Activated naive CD8-positive, alpha-beta T cell treated with anti-CD3 and anti-CD28 coated beads, Interleukin-2, amount 10 ng/mL, durations not matched to agents 7 days and 5 days (primary cell): ENCODE measurements at regions of chr20 and their contacts with region 1.

Region 1: DNA sequence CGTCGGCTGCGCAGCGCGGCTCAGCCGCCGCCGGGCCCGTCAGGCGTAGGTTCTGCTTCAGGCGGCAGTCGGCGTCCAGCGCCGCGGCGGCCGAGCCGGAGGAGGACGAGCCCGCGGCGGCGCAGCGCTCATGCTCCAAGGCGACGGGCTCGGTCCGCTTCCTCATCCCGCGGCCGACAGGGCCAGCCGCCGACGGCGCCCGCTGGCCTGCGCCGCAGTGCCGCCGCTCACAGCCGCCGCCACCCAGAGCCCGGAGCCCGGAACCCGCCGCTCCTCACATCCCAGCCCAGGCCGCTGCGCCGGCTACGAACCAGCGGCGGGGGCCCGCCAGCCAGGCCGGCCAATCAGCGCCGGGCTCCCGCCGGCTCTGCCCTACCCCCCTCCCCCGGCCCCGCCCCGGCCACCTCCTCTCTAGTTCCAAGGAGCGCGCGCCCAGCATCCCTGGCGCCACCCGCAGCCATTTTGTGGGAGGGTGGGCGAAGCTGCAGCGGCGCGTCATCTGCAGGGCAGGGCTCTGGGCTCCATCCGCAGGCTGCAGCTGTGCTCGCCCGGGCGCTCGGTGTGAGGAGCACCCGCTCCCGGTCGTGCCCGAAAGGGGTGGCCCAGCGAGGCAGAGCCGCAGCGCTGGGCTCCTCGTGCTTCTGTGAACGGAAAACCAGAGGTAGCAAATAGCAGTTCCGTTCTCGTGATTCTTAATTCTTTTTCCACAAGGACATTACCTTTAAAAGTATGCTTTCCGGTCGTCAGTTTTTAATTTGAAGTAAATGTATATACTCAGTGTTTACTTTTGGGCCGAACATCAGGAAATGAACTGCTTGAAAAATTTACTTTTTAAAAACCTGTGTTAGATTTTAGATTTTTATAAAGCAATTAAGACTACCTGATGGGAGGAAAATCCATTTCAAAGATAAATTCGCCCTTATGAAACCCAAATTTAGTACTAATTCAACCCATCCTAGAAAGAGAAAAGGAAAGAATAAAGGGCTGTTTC is at the start of gene ABHD12:
- DNase-seq: peak; percentile 94
- ATAC-seq: peak; percentile 93
- H3K4me3 Mint-ChIP-seq: peak within 1 kb of the TSS; percentile 89
- H3K27ac Mint-ChIP-seq: peak within 1 kb of the TSS; percentile 92
- H3K4me1 Mint-ChIP-seq: peaks cover 9% of the 10 kb centered on the region
- H3K27me3 Mint-ChIP-seq: peaks cover 4% of the 10 kb centered on the region
- total RNA-seq, gene ABHD12: 26.5 to 27.3 TPM

Region 2: GRCh38 chr20:25407311-25408169 is 16.7 kb after region 1 on chr20 and contains the start of gene GINS1:
- POLR2A ChIA-PET with region 1: interaction called, 19 read pairs
- DNase-seq: peak; percentile 87
- ATAC-seq: peak; percentile 94
- H3K4me3 Mint-ChIP-seq: peak within 1 kb of the TSS; percentile 84
- H3K27ac Mint-ChIP-seq: peak within 1 kb of the TSS; percentile 77
- H3K4me1 Mint-ChIP-seq: peaks cover 16% of the 10 kb centered on the region
- H3K27me3 Mint-ChIP-seq: no peaks in the 10 kb centered on the region
- total RNA-seq, gene GINS1: 23.7 to 25.6 TPM

Region 3: GRCh38 chr20:25486377-25486776 is 95.5 kb after region 1 on chr20:
- POLR2A ChIA-PET with region 1: no interaction called
- DNase-seq: no peak
- ATAC-seq: peak; percentile 55
- H3K4me3 Mint-ChIP-seq: no peak overlapping the region
- H3K27ac Mint-ChIP-seq: no peak overlapping the region
- H3K4me1 Mint-ChIP-seq: peaks cover 17% of the 10 kb centered on the region
- H3K27me3 Mint-ChIP-seq: no peaks in the 10 kb centered on the region